GM10248 (cell line): ENCODE measurements at regions of chr10 and their contacts with region 1.

Region 1: DNA sequence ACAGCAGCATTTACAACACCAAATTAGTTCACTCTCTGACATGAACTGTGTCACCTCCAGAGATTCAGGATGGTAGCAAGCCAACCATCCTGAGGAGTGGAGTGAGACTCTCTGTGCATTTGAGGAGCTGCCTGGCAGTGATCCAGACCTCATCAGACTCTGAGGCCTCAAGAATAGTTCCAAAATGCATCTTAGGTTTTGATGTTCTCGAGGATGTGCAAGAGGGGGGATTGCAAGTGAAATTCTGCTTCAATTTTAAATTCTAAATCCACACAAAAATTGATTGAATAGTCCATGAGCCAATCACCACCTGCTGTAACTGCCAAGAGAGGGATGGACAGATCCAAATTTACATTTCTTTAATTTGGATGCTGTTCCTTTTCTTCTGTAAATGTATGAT is 49.7 kb downstream of the SLK start:
- DNase-seq: no peak
- CTCF ChIP-seq: no peak

Region 2: DNA sequence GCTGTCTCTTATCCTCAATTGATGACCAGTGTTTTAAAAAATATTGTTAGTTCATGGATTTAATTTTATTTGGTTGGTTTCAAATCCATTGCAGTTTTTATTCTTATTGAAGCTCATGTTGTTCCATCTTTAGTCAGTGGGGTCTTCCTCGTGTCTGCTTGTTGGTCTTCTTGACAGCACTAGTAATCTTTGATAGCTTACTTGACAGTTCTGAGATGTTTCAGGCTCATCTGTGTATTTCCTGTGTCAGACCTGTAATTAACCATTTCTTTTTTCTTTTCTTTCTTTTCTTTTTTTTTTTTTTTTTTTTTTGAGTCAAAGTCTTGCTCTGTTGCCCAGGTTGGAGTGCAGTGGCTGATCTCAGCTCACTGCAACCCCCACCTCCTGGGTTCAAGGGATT is 21.5 kb before region 1 on chr10:
- CTCF ChIA-PET with region 1: interaction called, 3 read pairs
- POLR2A ChIA-PET with region 1: interaction called, 10 read pairs
- DNase-seq: no peak
- CTCF ChIP-seq: no peak